Ascending aorta (tissue), 2 donors: ENCODE measurements at regions of chr11 and their contacts with region 1.

Region 1: DNA sequence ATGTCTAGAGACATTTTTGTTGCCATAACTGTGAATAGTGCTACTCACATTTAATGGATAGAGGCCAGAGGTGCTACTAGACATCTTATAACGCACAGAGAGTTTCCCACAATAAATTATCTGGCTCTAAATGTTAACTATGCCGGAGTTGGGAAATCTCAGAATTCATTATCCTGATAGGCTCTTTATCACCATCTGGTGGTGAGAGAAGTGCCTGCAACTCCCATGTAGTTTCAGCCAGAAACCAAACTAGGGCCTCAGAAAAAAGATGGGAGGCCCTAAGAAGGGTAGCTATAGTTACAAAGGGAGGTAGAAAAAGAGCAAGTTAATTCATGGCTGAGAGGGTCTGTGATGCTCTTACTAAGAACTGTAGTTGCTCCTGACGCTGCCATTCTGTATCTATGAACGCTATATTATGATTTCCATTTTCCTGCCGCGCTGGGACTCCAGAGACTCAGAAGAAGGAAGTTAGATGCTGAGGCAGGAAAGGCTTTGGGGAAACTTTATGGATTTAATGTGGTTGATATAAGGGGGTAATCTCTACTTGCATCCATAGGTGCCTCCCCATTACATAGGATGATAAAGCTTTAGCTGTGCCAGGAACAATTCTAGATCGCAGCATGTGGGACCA is 22.9 kb upstream of the MRPL17 start:
- DNase-seq: peak in 1 of 2 donors; percentile 75
- H3K4me3 ChIP-seq: no peak overlapping the region
- H3K27ac ChIP-seq: no peak overlapping the region
- H3K4me1 ChIP-seq: no peaks in the 10 kb centered on the region
- H3K27me3 ChIP-seq: no peaks in the 10 kb centered on the region
- CTCF ChIP-seq: peak; percentile 81 to 92 (median 88)

Region 2: GRCh38 chr11:6531267-6531752 is 174.7 kb before region 1 on chr11:
- intact Hi-C with region 1: loop called (anchors 2 kb)
- DNase-seq: no peak
- H3K4me3 ChIP-seq: no peak overlapping the region
- H3K27ac ChIP-seq: no peak overlapping the region
- H3K4me1 ChIP-seq: no peaks in the 10 kb centered on the region
- H3K27me3 ChIP-seq: no peaks in the 10 kb centered on the region
- CTCF ChIP-seq: peak; percentile 67 to 70 (median 70)

Region 3: DNA sequence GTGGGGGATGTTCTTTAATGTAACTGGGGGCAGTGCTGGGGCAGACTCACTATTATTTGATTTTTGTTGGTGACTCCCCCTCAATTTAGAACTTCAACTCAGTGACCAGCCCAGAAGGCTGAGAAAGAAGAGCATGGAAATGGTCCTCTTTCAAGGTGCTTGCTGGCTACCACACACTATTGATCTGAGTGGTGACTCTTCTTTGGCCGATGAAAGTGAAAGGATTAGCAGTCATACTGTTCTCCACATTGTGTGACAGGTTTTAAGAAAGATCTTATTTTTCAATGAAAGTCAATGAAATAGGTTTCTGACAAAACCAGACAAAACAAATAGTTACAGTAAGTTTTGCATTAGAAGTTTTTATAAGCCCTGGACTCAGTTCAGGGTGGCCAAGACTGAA is 344.2 kb after region 1 on chr11:
- intact Hi-C with region 1: no loop called
- DNase-seq: no peak
- H3K4me3 ChIP-seq: no peak overlapping the region
- H3K27ac ChIP-seq: no peak overlapping the region
- H3K4me1 ChIP-seq: no peaks in the 10 kb centered on the region
- H3K27me3 ChIP-seq: no peaks in the 10 kb centered on the region
- CTCF ChIP-seq: no peak